GM13977 (cell line): ENCODE measurements at regions of chr2 and their contacts with region 1.

Region 1: DNA sequence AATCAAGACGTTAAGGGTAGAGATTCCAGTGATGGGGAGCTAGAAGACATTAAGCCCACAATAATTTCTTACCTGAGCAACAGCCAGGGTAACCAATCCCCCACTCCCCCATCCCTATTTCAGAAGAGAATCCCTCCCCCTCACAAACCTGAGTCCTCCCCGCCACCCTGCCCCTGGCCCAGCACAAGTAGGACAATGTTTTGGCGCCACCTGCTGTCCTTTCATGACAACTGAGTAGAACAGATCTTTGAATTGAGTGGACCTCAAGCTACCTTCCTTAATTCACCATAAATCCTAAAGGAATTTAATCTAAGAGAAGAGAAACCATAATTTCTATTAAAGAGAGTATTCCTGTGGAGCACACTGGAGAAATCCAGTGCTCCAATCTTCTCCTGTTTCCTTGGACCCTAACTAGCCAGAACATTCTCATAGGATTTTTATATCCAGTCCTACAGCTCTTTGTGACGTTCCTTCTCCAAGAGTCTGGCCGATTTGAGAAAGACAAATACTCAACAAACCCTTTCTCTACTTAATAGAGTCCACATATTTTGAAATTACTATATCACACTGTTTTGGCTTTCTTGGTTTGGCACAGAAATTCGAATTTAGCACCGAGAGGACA is 41.1 kb downstream of the NHEJ1 start:
- DNase-seq: peak; percentile 64
- CTCF ChIP-seq: peak; percentile 74

Region 2: GRCh38 chr2:219060821-219061791 is 58.4 kb before region 1 on chr2 and contains the start of gene IHH:
- in situ Hi-C with region 1: loop called (anchors 10 kb)
- DNase-seq: peak; percentile 45
- CTCF ChIP-seq: no peak

Region 3: DNA sequence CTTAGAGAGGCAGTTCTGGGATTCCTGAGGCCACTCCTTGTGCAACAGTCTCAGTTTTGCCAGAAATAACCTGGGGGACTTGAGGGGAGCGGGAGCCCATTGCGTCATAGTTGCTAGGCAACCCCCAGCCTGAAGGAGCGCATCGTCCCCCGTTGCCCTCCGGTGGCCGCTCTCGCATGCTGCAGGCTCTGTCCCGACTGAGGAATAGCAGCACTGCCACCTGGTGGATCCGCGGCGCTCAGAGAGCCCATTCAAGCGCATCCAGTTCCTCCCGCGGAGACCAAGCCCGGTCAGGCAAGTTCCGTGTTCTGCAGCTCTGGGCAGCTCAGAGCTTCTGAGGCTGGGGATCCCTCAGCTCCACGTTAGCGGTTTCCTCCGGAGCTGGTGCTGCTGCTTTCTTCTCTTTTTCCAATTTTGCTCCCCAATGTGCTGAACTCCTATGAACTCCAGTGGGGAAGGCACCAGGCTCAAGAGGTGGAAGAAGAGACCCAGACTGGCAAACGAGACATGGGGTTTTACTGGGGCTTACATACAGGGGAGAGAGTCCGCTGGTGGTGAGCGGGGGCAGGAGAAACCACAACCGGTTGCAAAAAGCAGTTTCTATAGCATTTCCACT is 523.0 kb after region 1 on chr2:
- in situ Hi-C with region 1: no loop called
- DNase-seq: peak; percentile 94
- CTCF ChIP-seq: peak; percentile 99